Left ventricle myocardium superior (tissue), 1 donor: ENCODE measurements at regions of chr6 and their contacts with region 1.

Region 1: GRCh38 chr6:33771146-33772081 is 17.5 kb downstream of the LEMD2 start:
- DNase-seq: peak; percentile 86
- ATAC-seq: peak; percentile 87

Region 2: DNA sequence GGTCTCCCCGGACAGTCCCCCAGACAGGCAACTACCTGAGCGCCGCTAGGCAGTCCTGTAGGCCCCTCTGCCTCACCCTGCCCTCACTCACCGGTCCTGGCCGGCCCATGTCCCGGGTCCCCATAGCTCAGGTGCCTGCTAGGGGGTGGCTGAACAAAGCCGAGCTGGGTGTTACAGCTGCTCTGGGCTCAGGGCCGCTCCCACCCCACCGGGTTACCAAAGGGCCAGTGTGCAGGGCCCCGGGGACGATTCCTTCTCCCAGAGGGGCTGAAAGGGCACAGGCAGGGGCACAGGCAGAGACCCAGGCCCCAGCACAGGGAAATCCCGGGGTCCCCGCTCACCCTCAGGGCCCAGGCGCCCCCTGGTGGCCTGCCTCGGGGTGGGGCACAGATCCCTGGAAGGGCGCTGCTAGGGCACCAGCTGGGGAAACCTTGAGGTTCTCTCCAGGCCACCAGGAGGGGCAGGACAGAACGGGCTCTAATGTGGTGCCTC is 256.1 kb after region 1 on chr6:
- intact Hi-C with region 1: loop called (anchors 10 kb)
- DNase-seq: peak; percentile 72
- ATAC-seq: peak; percentile 76

Region 3: DNA sequence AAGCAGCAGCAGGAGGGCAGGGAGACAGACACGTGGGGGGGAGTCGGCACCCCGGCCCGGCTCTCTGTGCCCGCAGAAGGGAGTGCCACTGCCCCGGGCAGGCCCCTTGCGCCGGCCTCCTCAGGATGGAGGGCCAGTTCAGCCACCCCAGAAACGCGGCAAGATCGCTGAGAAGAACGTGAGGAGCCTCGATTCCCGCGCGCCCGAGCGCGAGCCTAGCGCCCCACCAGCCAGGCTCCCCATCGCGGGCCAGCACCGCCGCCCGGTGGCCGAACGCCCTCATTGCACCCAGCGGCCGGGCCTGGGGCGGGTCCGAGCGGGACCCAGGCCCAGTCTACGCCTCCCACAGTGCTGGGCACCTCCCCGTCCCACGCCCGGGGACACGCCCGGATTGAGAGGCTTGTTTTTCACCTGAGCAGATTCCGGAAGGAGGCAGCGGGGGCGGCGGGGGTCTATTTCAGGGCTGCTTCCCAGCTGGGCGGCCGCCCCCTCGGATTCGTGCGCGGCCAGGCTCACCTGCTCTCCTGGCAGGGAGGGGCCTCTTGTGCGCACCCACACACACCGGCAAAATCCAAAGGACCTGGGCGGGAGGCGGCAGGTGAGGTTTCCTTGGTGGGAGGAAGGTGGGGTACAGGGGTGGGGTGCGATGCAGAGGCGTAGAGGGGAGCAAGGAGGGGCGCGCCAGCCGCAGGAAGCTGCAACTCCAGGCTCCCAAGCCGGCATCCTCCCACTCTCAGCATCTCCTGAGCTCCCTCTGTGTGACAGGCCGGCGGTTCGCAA is 383.4 kb after region 1 on chr6:
- intact Hi-C with region 1: loop called (anchors 10 kb)
- DNase-seq: peak; percentile 76
- ATAC-seq: peak; percentile 82